CD14-positive monocyte (primary cell): ENCODE measurements at regions of chr21 and their contacts with region 1.

Region 1: GRCh38 chr21:39114871-39115575 is 68.2 kb downstream of the PSMG1 start:
- DNase-seq: peak in 2 of 3 donors; percentile 26 to 28
- H3K4me3 ChIP-seq: no peak overlapping the region
- H3K4me3 Mint-ChIP-seq: no peak overlapping the region
- H3K27ac ChIP-seq: no peak overlapping the region
- H3K27ac Mint-ChIP-seq: no peak overlapping the region
- H3K4me1 ChIP-seq: no peaks in the 10 kb centered on the region
- H3K4me1 Mint-ChIP-seq: peaks cover 14% of the 10 kb centered on the region
- H3K27me3 ChIP-seq: no peaks in the 10 kb centered on the region
- H3K27me3 Mint-ChIP-seq: peaks cover 0 to 2% (median 1%) of the 10 kb centered on the region in 3 donors
- CTCF ChIP-seq: no peak

Region 2: DNA sequence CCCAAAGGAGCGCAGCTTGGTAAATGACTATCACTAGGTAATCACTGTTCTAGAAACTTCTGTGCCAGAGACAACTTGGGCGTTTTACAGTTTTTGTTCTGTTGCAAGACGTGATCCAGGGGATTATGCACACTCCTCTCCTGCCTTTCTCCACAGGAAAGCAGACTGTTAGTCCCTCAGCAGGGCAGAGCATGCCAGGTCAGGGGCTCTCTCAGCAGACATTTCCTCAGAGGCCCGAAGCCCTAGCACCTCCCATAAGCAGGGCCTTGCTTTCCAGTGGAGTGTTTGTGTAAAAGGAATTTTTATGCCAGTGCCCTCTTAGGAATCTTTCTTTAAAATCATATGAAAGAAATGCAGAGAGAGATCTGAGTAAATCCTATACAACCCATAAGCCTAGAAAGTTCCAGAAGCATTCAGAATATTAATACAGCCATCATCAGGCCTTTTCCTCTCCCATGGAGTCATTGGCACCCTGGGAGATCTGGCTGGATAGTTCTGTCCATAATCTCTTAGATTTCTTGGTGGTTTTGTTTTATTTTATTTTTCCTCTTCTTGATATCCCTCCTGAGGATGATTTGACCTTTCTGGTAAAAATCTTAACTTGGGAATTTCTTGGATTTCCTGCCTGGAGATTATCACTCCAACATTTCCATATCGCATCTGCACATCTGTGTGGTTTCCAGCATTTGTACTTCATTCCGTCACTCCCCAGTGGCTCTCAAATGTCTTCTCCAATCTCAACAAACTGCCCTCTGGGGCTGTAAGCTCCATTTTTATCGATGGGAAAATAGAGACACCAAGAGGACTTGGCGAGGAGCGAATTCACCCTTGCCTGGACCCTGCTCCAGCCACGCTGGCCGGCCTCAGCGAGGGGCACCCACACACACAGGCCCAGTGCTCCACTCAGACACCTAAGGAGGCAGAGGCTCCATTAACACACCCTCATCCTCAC is 47.9 kb before region 1 on chr21:
- intact Hi-C with region 1: loop called in 1 of 2 experiments (anchors 10 kb)
- DNase-seq: no peak
- H3K4me3 ChIP-seq: no peak overlapping the region
- H3K4me3 Mint-ChIP-seq: no peak overlapping the region
- H3K27ac ChIP-seq: no peak overlapping the region
- H3K27ac Mint-ChIP-seq: no peak overlapping the region
- H3K4me1 ChIP-seq: no peaks in the 10 kb centered on the region
- H3K4me1 Mint-ChIP-seq: no peaks in the 10 kb centered on the region
- H3K27me3 ChIP-seq: no peaks in the 10 kb centered on the region
- H3K27me3 Mint-ChIP-seq: peaks cover 0 to 3% (median 0%) of the 10 kb centered on the region in 3 donors
- CTCF ChIP-seq: no peak